Activated CD4-positive, alpha-beta memory T cell treated with anti-CD3 and anti-CD28 coated beads for 36 hours (primary cell): ENCODE measurements at regions of chr1 and their contacts with region 1.

Region 1: DNA sequence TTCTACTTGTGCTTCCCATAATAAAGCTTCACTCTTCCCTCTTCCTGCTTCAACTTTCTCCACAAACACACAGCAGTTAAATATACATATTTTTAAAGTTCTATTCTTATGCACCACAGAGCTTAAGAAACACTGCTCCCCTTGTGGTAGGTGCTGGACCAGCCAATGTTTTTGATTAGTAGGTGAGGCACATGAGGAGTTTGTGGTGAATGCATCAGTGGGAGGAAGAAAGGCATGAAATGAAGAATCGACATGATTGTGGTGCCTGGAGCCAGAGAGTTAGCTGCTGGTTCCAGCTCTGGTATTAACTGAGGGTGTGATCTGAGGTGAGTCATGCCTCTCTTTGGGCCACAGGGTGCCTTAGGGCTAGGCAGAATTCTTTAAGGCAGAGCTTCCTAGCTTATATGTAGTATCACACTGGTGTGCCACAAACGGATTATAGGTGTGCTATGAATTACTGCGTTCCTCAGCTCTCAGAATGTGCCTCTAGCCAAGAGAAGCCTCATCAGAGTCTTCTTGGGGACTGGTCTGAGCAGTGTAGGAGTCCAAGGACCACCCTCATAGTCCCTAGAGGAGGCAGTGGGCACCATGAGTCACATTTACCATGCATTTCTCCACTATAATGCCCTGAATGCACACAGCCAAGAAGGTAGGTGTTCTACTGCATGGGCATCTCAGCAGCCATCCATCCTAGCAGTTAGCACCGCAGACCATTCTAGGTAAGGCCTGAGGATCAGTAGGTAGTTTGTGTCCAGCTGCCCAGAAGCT is 97.4 kb upstream of the SGIP1 start:
- DNase-seq: peak; percentile 81
- H3K4me3 Mint-ChIP-seq: no peak overlapping the region
- H3K27ac Mint-ChIP-seq: peak overlapping the region; percentile 39
- H3K4me1 Mint-ChIP-seq: peaks cover 39% of the 10 kb centered on the region
- H3K27me3 Mint-ChIP-seq: no peaks in the 10 kb centered on the region

Region 2: DNA sequence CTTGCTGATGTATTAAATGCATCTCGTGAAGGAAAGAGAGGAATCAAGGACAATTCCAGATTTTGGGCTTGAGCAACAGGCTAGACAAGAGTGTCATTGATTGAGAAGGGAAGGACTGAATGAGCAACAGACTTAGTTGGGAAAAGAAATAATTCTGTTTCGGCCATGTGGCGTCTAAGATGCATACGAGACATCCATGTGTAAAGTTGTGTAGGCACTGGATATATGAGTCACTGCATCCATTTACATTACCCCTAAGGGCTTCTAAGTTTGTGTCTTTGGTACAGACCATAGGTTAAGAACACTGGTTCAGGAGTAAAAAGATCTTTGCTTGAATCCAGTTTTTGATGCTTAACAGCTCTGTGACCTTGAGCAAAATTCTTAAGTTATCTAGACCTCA is 209.6 kb before region 1 on chr1:
- CTCF ChIA-PET with region 1: no interaction called
- POLR2A ChIA-PET with region 1: no interaction called
- intact Hi-C with region 1: no loop called
- DNase-seq: no peak
- H3K4me3 Mint-ChIP-seq: no peak overlapping the region
- H3K27ac Mint-ChIP-seq: no peak overlapping the region
- H3K4me1 Mint-ChIP-seq: peaks cover 6% of the 10 kb centered on the region
- H3K27me3 Mint-ChIP-seq: peaks cover 5% of the 10 kb centered on the region

Region 3: GRCh38 chr1:66258404-66259105 is 178.0 kb before region 1 on chr1:
- CTCF ChIA-PET with region 1: interaction called, 476 read pairs
- POLR2A ChIA-PET with region 1: interaction called, 12 read pairs
- intact Hi-C with region 1: loop called (anchors 1 kb)
- DNase-seq: no peak
- H3K4me3 Mint-ChIP-seq: no peak overlapping the region
- H3K27ac Mint-ChIP-seq: peak overlapping the region; percentile 64
- H3K4me1 Mint-ChIP-seq: peaks cover 85% of the 10 kb centered on the region
- H3K27me3 Mint-ChIP-seq: no peaks in the 10 kb centered on the region

Region 4: GRCh38 chr1:66282343-66282852 is 154.2 kb before region 1 on chr1:
- CTCF ChIA-PET with region 1: interaction called, 19 read pairs
- POLR2A ChIA-PET with region 1: interaction called, 6 read pairs
- intact Hi-C with region 1: loop called (anchors 1 kb)
- DNase-seq: peak; percentile 80
- H3K4me3 Mint-ChIP-seq: no peak overlapping the region
- H3K27ac Mint-ChIP-seq: peak overlapping the region; percentile 76
- H3K4me1 Mint-ChIP-seq: peaks cover 87% of the 10 kb centered on the region
- H3K27me3 Mint-ChIP-seq: no peaks in the 10 kb centered on the region

Region 5: GRCh38 chr1:66360285-66360724 is 76.3 kb before region 1 on chr1:
- CTCF ChIA-PET with region 1: interaction called, 39 read pairs
- POLR2A ChIA-PET with region 1: interaction called, 4 read pairs
- intact Hi-C with region 1: no loop called
- DNase-seq: no peak
- H3K4me3 Mint-ChIP-seq: no peak overlapping the region
- H3K27ac Mint-ChIP-seq: no peak overlapping the region
- H3K4me1 Mint-ChIP-seq: peaks cover 83% of the 10 kb centered on the region
- H3K27me3 Mint-ChIP-seq: no peaks in the 10 kb centered on the region

Region 6: DNA sequence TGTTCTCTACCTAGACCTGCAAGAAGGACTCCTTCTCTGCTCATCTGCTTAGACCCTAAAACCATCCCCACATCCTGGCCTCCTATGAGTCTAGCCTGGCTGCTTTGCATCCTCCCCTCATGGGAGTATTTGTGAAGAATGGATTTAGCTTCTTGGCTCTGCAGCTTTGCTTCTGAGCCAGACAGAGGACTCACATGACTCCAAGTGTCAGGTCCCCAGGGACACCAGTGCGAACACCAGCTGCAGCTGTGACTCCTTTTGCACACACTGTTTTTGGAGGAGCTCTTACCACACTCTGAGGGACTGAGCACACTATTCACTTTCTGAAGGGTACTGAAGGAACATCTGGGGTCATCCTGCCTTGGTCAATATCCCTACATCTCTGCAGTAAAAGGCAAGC is 34.4 kb before region 1 on chr1:
- CTCF ChIA-PET with region 1: interaction called, 7 read pairs
- POLR2A ChIA-PET with region 1: interaction called, 3 read pairs
- intact Hi-C with region 1: loop called (anchors 1 kb)
- DNase-seq: no peak
- H3K4me3 Mint-ChIP-seq: no peak overlapping the region
- H3K27ac Mint-ChIP-seq: no peak overlapping the region
- H3K4me1 Mint-ChIP-seq: peaks cover 31% of the 10 kb centered on the region
- H3K27me3 Mint-ChIP-seq: no peaks in the 10 kb centered on the region

Region 7: GRCh38 chr1:66455446-66455845 is 18.9 kb after region 1 on chr1:
- CTCF ChIA-PET with region 1: no interaction called
- POLR2A ChIA-PET with region 1: no interaction called
- intact Hi-C with region 1: no loop called
- DNase-seq: no peak
- H3K4me3 Mint-ChIP-seq: no peak overlapping the region
- H3K27ac Mint-ChIP-seq: no peak overlapping the region
- H3K4me1 Mint-ChIP-seq: no peaks in the 10 kb centered on the region
- H3K27me3 Mint-ChIP-seq: peaks cover 2% of the 10 kb centered on the region

Region 8: GRCh38 chr1:66648901-66649595 is 212.5 kb after region 1 on chr1:
- CTCF ChIA-PET with region 1: no interaction called
- POLR2A ChIA-PET with region 1: no interaction called
- intact Hi-C with region 1: no loop called
- DNase-seq: no peak
- H3K4me3 Mint-ChIP-seq: no peak overlapping the region
- H3K27ac Mint-ChIP-seq: no peak overlapping the region
- H3K4me1 Mint-ChIP-seq: no peaks in the 10 kb centered on the region
- H3K27me3 Mint-ChIP-seq: peaks cover 14% of the 10 kb centered on the region